Activated CD4-positive, alpha-beta T cell treated with anti-CD3 and anti-CD28 coated beads for 36 hours (primary cell): ENCODE measurements at regions of chr5 and their contacts with region 1.

Region 1: GRCh38 chr5:172806897-172807672 is 27.0 kb upstream of the ERGIC1 start:
- DNase-seq: peak; percentile 98
- ATAC-seq: peak; percentile 97
- H3K4me3 Mint-ChIP-seq: peak overlapping the region; percentile 54
- H3K27ac Mint-ChIP-seq: peak overlapping the region; percentile 84
- H3K4me1 Mint-ChIP-seq: peaks cover 17% of the 10 kb centered on the region
- H3K27me3 Mint-ChIP-seq: no peaks in the 10 kb centered on the region

Region 2: GRCh38 chr5:172777881-172778814 is 28.9 kb before region 1 on chr5:
- CTCF ChIA-PET with region 1: interaction called, 4 read pairs
- POLR2A ChIA-PET with region 1: interaction called, 19 read pairs
- intact Hi-C with region 1: loop called (anchors 1 kb)
- DNase-seq: peak; percentile 36
- ATAC-seq: peak; percentile 45
- H3K4me3 Mint-ChIP-seq: peak overlapping the region; percentile 40
- H3K27ac Mint-ChIP-seq: peak overlapping the region; percentile 92
- H3K4me1 Mint-ChIP-seq: peaks cover 59% of the 10 kb centered on the region
- H3K27me3 Mint-ChIP-seq: no peaks in the 10 kb centered on the region

Region 3: GRCh38 chr5:172817664-172818063 is 10.6 kb after region 1 on chr5:
- CTCF ChIA-PET with region 1: no interaction called
- POLR2A ChIA-PET with region 1: no interaction called
- intact Hi-C with region 1: no loop called
- DNase-seq: no peak
- ATAC-seq: no peak
- H3K4me3 Mint-ChIP-seq: no peak overlapping the region
- H3K27ac Mint-ChIP-seq: no peak overlapping the region
- H3K4me1 Mint-ChIP-seq: peaks cover 18% of the 10 kb centered on the region
- H3K27me3 Mint-ChIP-seq: peaks cover 3% of the 10 kb centered on the region

Region 4: GRCh38 chr5:172833686-172834414 is 26.8 kb after region 1 on chr5 and contains the start of gene ERGIC1:
- CTCF ChIA-PET with region 1: no interaction called
- POLR2A ChIA-PET with region 1: interaction called, 5 read pairs
- intact Hi-C with region 1: loop called (anchors 1 kb)
- DNase-seq: peak; percentile 79
- ATAC-seq: peak; percentile 77
- H3K4me3 Mint-ChIP-seq: peak within 1 kb of the TSS; percentile 79
- H3K27ac Mint-ChIP-seq: peak within 1 kb of the TSS; percentile 84
- H3K4me1 Mint-ChIP-seq: peaks cover 42% of the 10 kb centered on the region
- H3K27me3 Mint-ChIP-seq: no peaks in the 10 kb centered on the region
- total RNA-seq, gene ERGIC1: 40.3 to 50.0 TPM